ENCODE measurements at regions of chr3 and their contacts with region 1.

Region 1: GRCh38 chr3:65439641-65440284 is 599.0 kb downstream of the MAGI1 start:
- DNase-seq: no peak
- H3K4me3 ChIP-seq: no peak overlapping the region
- H3K27ac ChIP-seq: no peak overlapping the region
- H3K4me1 ChIP-seq: no peaks in the 10 kb centered on the region
- H3K27me3 ChIP-seq: no peaks in the 10 kb centered on the region
- CTCF ChIP-seq: peak in 5 of 6 experiments; percentile 26 to 64 (median 41)
- POLR2A ChIP-seq: no peak

Region 2: DNA sequence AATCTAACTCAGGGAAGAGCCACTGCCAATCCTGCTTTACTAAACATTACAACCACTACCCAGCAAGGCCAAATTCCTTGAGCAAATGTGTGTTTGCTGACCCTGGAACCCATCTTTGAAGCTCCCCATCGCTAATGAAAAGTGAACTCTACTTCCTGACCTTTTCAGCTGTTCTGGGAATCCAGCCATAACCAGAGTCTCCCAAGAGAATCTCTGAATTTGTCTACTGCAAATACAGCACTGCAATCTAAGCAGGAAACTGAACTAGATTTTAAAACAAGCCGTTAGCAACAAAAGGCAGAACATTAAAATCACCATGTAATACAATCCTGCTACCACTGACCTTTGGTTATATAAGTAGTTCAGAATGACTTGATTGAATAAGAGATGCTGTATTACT is 289.8 kb after region 1 on chr3:
- intact Hi-C with region 1: loop called (anchors 10 kb)
- DNase-seq: no peak
- H3K4me3 ChIP-seq: no peak overlapping the region
- H3K27ac ChIP-seq: no peak overlapping the region
- H3K4me1 ChIP-seq: peaks cover 0 to 30% (median 0%) of the 10 kb centered on the region in 3 donors
- H3K27me3 ChIP-seq: no peaks in the 10 kb centered on the region
- CTCF ChIP-seq: no peak
- POLR2A ChIP-seq: no peak

Region 3: GRCh38 chr3:66372681-66373350 is 933.1 kb after region 1 on chr3:
- intact Hi-C with region 1: no loop called
- DNase-seq: no peak
- H3K4me3 ChIP-seq: no peak overlapping the region
- H3K27ac ChIP-seq: no peak overlapping the region
- H3K4me1 ChIP-seq: peaks cover 0 to 6% (median 0%) of the 10 kb centered on the region in 3 donors
- H3K27me3 ChIP-seq: no peaks in the 10 kb centered on the region
- CTCF ChIP-seq: no peak
- POLR2A ChIP-seq: no peak

Measured in esophagus squamous epithelium (tissue), 5 donors.